ENCODE measurements at regions of chr1 and their contacts with region 1.

Region 1: GRCh38 chr1:203172128-203173010 is 3.3 kb downstream of the MYBPH start:
- DNase-seq: peak; percentile 67 to 78
- ATAC-seq: peak; percentile 67 to 93
- H3K4me3 ChIP-seq: no peak overlapping the region
- H3K27ac ChIP-seq: no peak overlapping the region
- H3K4me1 ChIP-seq: peaks cover 18% of the 10 kb centered on the region
- CTCF ChIP-seq: peak; percentile 78
- EP300 ChIP-seq: no peak
- POLR2A ChIP-seq: no peak
- RAD21 ChIP-seq: peak; percentile 61 to 68

Region 2: GRCh38 chr1:202452493-202452892 is 719.9 kb before region 1 on chr1:
- CTCF ChIA-PET with region 1: no interaction called
- POLR2A ChIA-PET with region 1: no interaction called
- DNase-seq: no peak
- ATAC-seq: no peak
- H3K4me3 ChIP-seq: no peak overlapping the region
- H3K27ac ChIP-seq: no peak overlapping the region
- H3K4me1 ChIP-seq: peaks cover 19% of the 10 kb centered on the region
- CTCF ChIP-seq: no peak
- EP300 ChIP-seq: no peak
- POLR2A ChIP-seq: no peak
- RAD21 ChIP-seq: no peak

Region 3: DNA sequence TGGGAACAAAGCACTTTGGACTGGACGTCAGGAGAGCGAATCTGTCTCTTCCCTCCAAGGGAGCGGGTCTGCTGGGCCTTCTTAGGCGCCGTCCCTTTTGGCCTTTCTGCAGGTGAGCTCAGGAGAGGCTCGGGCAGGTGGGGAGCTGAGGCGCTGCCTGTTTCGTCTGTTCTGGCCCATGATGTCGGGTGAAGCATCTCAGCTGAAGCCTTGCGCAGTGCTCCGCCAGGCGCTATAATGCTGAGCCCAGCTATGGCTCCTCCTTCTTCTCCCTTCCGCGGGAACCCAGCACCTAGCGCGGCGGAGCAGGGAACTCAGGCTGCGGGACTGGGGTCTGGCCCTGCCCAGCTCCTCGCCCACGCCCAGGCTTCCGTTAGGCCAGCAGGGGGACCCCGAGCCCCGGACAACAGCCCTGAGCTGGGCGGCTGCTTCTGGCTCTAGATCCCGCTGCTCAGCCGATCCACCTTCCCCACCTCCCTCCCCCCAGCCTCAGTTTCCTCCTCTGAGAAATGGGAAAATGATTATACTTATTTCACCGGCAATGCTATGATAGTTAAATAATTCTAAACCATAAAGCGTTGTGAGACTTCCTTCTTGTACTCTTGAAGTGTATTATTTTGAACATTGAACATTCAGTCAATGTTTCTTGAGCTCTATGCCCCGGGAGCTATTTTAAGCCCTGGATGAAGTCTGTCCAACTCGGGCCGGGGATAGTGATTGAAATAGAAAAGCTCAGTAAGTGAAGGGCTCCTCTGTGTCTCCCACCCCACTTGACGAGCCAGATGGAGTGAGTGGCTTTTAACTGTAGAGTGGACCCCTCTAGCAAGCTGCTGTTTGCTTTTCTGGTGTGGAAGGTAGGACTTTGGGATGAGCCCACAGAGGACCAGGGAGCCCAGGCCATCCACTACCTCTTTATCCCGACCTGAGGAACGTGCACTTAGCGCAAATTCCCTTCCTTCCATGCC is 54.5 kb before region 1 on chr1:
- CTCF ChIA-PET with region 1: interaction called, 99 read pairs
- POLR2A ChIA-PET with region 1: no interaction called
- DNase-seq: peak; percentile 63 to 93
- ATAC-seq: peak; percentile 91 to 99
- H3K4me3 ChIP-seq: no peak overlapping the region
- H3K27ac ChIP-seq: no peak overlapping the region
- H3K4me1 ChIP-seq: 0 out of 3 replicates have a peak, but pooled peaks cover 4% of the 10 kb centered on the region
- CTCF ChIP-seq: peak; percentile 81
- EP300 ChIP-seq: no peak
- POLR2A ChIP-seq: no peak
- RAD21 ChIP-seq: peak; percentile 87 to 94

Region 4: DNA sequence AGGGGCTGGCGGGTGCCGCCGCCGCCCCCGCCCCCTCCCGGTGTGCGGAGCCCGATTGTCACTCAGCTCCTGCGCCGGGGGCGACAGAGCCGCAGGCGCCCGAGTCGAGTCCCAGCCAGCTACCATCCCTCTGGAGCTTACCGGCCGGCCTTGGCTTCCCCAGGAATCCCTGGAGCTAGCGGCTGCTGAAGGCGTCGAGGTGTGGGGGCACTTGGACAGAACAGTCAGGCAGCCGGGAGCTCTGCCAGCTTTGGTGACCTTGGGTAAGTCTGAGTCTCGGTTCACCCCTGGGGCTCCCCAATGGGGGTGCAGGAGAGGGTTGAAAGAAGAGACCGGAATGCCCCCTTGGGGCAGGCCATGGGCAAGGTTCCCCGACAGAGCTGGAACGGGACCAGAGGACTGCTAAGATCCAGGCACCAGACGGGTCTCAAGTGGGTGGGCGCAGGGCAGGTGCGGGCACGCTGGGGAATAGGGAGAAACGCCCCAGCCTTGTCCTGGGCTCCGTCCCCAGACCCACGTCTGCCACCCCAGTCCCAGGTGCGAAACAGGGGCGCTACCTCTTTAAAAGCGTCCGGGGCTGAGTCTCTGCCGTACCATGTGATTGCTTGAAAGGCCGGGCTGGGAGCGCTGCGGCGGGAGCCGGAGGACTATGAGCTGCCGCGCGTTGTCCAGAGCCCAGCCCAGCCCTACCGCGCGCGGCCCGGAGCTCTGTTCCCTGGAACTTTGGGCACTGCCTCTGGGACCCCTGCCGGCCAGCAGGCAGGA is 44.5 kb before region 1 on chr1 and contains the start of gene ADORA1:
- CTCF ChIA-PET with region 1: interaction called, 67 read pairs
- POLR2A ChIA-PET with region 1: no interaction called
- DNase-seq: peak; percentile 43 to 55
- ATAC-seq: peak; percentile 88 to 93
- H3K4me3 ChIP-seq: peak within 1 kb of the TSS; percentile 41
- H3K27ac ChIP-seq: peak within 1 kb of the TSS; percentile 32 to 67; a peak in 4 of 6 replicates
- H3K4me1 ChIP-seq: peaks cover 23% of the 10 kb centered on the region; the same call in 1 of the 3 replicates
- CTCF ChIP-seq: no peak
- EP300 ChIP-seq: no peak
- POLR2A ChIP-seq: no peak
- RAD21 ChIP-seq: no peak
- polyA plus RNA-seq, gene ADORA1: 0.48 and 0.50 TPM in 2 replicates

Region 5: DNA sequence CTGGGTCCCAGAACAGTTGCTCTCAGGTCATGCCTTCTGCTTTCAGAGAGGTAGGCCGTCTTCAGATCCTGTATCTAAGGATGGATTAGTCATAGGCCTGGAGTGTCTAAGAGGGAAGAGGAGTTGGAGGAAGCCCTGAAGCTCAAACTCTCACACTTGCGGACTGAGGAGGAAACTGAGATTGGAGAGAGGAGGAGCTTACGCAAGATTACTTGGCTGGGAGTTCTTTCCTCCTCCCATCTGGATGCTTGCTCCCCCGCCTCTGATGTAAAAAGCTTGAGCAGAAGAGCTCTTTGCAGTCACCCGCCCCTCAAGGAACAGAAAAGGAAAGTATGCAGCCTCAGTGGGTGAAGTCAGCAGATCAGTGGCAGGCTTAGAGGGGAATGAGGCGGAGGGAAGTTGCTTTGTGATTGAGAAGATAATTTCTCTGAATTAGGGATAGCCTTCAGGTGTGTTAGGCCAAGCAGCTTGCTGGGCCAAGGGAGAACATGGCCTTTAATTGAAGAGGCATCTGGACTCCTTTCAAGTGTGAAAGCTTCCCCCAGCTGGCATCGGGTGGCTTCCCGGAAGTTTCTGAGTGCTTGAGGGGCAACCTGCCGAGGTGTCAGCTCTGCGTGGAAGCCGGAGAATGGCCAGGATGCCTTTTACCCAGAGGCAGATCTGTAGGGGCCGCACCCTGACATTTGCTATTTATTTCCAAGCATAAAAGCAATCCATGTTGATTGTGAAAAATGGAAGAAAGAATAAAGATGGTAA is 38.2 kb before region 1 on chr1:
- CTCF ChIA-PET with region 1: interaction called, 67 read pairs
- POLR2A ChIA-PET with region 1: no interaction called
- DNase-seq: no peak
- ATAC-seq: no peak
- H3K4me3 ChIP-seq: no peak overlapping the region
- H3K27ac ChIP-seq: no peak overlapping the region; a peak in 1 of 6 replicates
- H3K4me1 ChIP-seq: peaks cover 20% of the 10 kb centered on the region; the same call in 2 of the 3 replicates
- CTCF ChIP-seq: no peak
- EP300 ChIP-seq: no peak
- POLR2A ChIP-seq: no peak
- RAD21 ChIP-seq: no peak

Region 6: DNA sequence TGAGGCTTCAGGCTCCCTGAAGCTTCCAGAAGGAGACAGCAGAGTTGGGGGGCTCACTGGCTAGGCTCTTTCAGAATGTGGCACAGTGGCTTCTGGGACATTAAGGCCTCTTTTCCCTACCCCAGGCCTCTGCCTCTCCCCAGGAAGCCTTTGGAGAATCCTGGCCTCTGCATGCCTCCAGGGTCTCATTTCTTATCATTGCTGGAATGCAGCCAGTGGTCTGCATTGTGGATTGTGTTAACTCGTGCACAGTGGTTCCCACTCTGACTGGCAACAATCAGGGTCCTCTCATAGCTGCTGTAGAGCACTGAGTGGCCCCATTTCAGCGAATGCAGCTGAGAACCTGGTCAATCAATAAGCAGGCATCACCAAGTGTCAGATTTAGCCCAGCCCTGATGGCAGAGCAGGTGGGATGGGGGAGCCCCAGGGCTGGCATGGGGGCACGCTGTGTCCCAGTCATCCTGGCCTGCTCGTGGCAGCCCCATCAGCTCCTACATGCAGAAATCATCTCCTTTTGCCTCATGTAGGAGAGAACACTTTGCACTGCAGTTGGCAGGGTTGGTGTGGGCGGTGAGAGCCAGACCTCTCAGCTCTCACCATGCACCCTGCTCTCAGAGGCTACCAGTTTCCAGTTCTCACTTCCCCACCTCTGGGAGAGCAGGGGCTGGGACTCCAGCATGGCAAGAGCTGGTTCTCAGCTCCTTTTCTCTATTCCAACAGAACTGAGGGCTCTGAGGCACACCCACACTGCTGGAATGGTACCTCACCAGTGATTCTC is 31.4 kb before region 1 on chr1:
- CTCF ChIA-PET with region 1: interaction called, 20 read pairs
- POLR2A ChIA-PET with region 1: no interaction called
- DNase-seq: no peak
- ATAC-seq: no peak
- H3K4me3 ChIP-seq: no peak overlapping the region
- H3K27ac ChIP-seq: no peak overlapping the region
- H3K4me1 ChIP-seq: peaks cover under 1% of the 10 kb centered on the region; the same call in 1 of the 3 replicates
- CTCF ChIP-seq: no peak
- EP300 ChIP-seq: no peak
- POLR2A ChIP-seq: no peak
- RAD21 ChIP-seq: no peak

Region 7: DNA sequence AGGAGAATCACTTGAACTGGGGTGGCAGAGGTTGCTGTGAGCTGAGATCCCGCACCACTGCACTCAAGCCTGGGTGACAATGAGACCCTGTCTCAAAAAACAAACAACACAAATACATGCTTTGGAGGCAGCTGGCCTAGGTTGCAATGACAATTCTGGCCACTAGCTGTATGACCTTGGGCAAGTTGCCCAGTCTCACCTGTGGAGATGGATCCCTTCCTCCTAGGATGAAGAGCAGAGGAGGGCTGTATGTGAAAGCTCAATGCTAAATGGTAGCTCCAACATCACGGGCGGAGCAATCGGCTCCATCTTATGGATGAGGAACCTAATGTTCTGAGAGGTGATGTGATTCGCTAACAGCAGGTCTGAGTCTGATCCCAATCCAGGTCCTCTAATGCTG is 24.2 kb before region 1 on chr1:
- CTCF ChIA-PET with region 1: interaction called, 20 read pairs
- POLR2A ChIA-PET with region 1: no interaction called
- DNase-seq: peak in 1 of 2 experiments; percentile 38
- ATAC-seq: peak in 1 of 2 experiments; percentile 48; a peak in 3 of 6 replicates
- H3K4me3 ChIP-seq: no peak overlapping the region
- H3K27ac ChIP-seq: no peak overlapping the region
- H3K4me1 ChIP-seq: peaks cover 13% of the 10 kb centered on the region
- CTCF ChIP-seq: 0 out of 3 replicates have a peak, but pooled peaks have one; percentile 5
- EP300 ChIP-seq: no peak
- POLR2A ChIP-seq: no peak
- RAD21 ChIP-seq: no peak

Region 8: GRCh38 chr1:203186446-203187303 is 14.3 kb after region 1 on chr1 and contains the start of gene CHI3L1:
- CTCF ChIA-PET with region 1: interaction called, 17 read pairs
- POLR2A ChIA-PET with region 1: no interaction called
- DNase-seq: no peak
- ATAC-seq: no peak
- H3K4me3 ChIP-seq: no peak within 1 kb of the TSS
- H3K27ac ChIP-seq: no peak within 1 kb of the TSS
- H3K4me1 ChIP-seq: no peaks in the 10 kb centered on the region
- CTCF ChIP-seq: no peak
- EP300 ChIP-seq: no peak
- POLR2A ChIP-seq: no peak
- RAD21 ChIP-seq: no peak
- polyA plus RNA-seq, gene CHI3L1: not detected in 2 replicates